ENCODE measurements at regions of chr12 and their contacts with region 1.

Region 1: GRCh38 chr12:24582954-24583601 is 365.8 kb downstream of the BCAT1 start:
- DNase-seq: no peak
- ATAC-seq: no peak
- H3K4me3 ChIP-seq: no peak overlapping the region
- H3K27ac ChIP-seq: no peak overlapping the region
- H3K4me1 ChIP-seq: no peaks in the 10 kb centered on the region
- H3K27me3 ChIP-seq: no peaks in the 10 kb centered on the region; a peak in 1 of 4 replicates
- CTCF ChIP-seq: no peak
- EP300 ChIP-seq: no peak
- POLR2A ChIP-seq: no peak
- RAD21 ChIP-seq: no peak

Region 2: GRCh38 chr12:24505366-24506015 is 77.6 kb before region 1 on chr12:
- CTCF ChIA-PET with region 1: no interaction called
- POLR2A ChIA-PET with region 1: no interaction called
- RAD21 ChIA-PET with region 1: no interaction called
- SMC1A ChIA-PET with region 1: no interaction called
- in situ Hi-C with region 1: no loop called
- intact Hi-C with region 1: loop called (anchors 2 kb)
- DNase-seq: no peak
- ATAC-seq: no peak
- H3K4me3 ChIP-seq: no peak overlapping the region
- H3K27ac ChIP-seq: no peak overlapping the region
- H3K4me1 ChIP-seq: no peaks in the 10 kb centered on the region
- H3K27me3 ChIP-seq: no peaks in the 10 kb centered on the region
- CTCF ChIP-seq: no peak
- EP300 ChIP-seq: no peak
- POLR2A ChIP-seq: no peak
- RAD21 ChIP-seq: no peak

Region 3: GRCh38 chr12:24565300-24565699 is 17.8 kb before region 1 on chr12:
- CTCF ChIA-PET with region 1: no interaction called
- POLR2A ChIA-PET with region 1: no interaction called
- RAD21 ChIA-PET with region 1: no interaction called
- SMC1A ChIA-PET with region 1: no interaction called
- in situ Hi-C with region 1: no loop called
- intact Hi-C with region 1: no loop called
- DNase-seq: no peak
- ATAC-seq: no peak
- H3K4me3 ChIP-seq: no peak overlapping the region
- H3K27ac ChIP-seq: no peak overlapping the region
- H3K4me1 ChIP-seq: no peaks in the 10 kb centered on the region
- H3K27me3 ChIP-seq: peaks cover 17 to 22% of the 10 kb centered on the region in 2 experiments
- CTCF ChIP-seq: no peak
- EP300 ChIP-seq: no peak
- POLR2A ChIP-seq: no peak
- RAD21 ChIP-seq: no peak